ENCODE measurements at regions of chr12 and their contacts with region 1.

Region 1: DNA sequence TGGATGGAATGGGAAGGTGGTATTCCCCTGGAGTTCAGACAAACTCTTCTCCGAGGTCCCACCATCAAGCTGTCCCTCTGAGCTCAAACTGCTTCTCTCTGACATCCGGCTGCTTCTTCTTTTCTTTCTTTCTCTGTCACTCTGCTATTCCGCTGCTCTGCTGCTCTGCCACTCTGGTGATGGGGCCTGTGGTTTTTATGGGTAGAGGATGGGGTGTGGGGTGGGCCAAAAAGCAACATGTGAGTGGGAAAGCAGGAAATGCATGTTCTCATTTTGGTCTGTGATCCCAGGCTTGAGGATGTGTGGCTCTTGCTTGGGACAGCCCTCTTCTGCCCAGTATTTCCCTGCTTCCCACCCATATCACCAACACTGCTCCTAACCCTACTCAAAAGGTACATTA is 30.6 kb downstream of the CLECL1 start:
- DNase-seq: no peak
- ATAC-seq: no peak

Region 2: GRCh38 chr12:9647825-9648700 is 54.2 kb before region 1 on chr12:
- intact Hi-C with region 1: loop called in 1 of 2 experiments (anchors 5 kb)
- DNase-seq: peak; percentile 85
- ATAC-seq: peak; percentile 95

Region 3: GRCh38 chr12:9736936-9737705 is 34.9 kb after region 1 on chr12:
- intact Hi-C with region 1: loop called in 1 of 2 experiments (anchors 2 kb)
- DNase-seq: no peak
- ATAC-seq: peak in 1 of 2 donors; percentile 35

Measured in left cardiac atrium (tissue), 4 donors.